Psoas muscle (tissue), 8 donors: ENCODE measurements at regions of chr15 and their contacts with region 1.

Region 1: DNA sequence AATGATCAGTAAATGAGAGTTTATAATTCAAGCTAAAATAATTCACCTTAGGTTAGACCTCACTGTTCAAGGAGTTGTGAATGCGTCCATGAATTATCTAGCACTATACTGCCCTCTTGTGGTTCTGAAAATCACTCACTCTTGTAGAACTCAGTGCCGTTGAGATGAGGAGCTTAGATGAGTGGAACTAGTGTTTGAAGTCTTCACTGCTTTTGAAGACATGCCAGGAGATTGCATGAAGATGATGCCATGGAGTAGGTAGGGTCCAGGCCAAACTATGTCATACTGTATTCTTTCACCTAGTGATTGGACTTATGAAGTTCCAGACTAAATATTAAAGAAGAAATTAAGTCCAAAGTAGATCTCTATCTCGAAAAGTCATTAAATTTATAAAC is 28.8 kb downstream of the LYSMD4 start:
- DNase-seq: no peak
- ATAC-seq: peak; percentile 71 to 82 (median 76)
- H3K4me3 ChIP-seq: no peak overlapping the region
- H3K27ac ChIP-seq: peak overlapping the region; percentile 90
- H3K4me1 ChIP-seq: peaks cover 49% of the 10 kb centered on the region
- H3K27me3 ChIP-seq: no peaks in the 10 kb centered on the region
- CTCF ChIP-seq: peak; percentile 85

Region 2: GRCh38 chr15:99275525-99276128 is 428.8 kb before region 1 on chr15:
- intact Hi-C with region 1: loop called in 1 of 2 experiments (anchors 5 kb)
- DNase-seq: no peak
- ATAC-seq: peak in 2 of 4 donors; percentile 26 to 35
- H3K4me3 ChIP-seq: no peak overlapping the region
- H3K27ac ChIP-seq: no peak overlapping the region
- H3K4me1 ChIP-seq: no peaks in the 10 kb centered on the region
- H3K27me3 ChIP-seq: no peaks in the 10 kb centered on the region
- CTCF ChIP-seq: no peak

Region 3: DNA sequence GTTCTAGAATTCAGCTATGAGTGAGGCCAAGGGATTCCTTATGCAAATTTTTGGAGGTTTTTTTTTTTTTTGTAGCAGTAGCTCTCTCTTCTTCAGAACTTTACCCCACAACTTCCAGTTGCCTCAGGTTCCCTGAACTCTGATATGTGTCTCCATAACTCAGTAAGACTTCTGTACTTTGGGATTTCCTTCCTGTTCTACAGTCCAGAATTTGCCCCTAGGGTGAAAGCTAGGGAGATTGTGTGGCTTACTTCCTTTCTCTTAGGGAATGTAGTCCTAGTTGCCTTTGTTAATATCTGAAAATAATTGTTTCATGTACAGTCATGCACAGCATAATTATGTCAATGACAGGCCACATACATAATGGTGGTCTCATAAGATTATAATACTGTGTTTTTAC is 422.3 kb before region 1 on chr15:
- intact Hi-C with region 1: loop called (anchors 1 to 5 kb)
- DNase-seq: no peak
- ATAC-seq: no peak
- H3K4me3 ChIP-seq: no peak overlapping the region
- H3K27ac ChIP-seq: no peak overlapping the region
- H3K4me1 ChIP-seq: peaks cover 18% of the 10 kb centered on the region
- H3K27me3 ChIP-seq: no peaks in the 10 kb centered on the region
- CTCF ChIP-seq: no peak

Region 4: DNA sequence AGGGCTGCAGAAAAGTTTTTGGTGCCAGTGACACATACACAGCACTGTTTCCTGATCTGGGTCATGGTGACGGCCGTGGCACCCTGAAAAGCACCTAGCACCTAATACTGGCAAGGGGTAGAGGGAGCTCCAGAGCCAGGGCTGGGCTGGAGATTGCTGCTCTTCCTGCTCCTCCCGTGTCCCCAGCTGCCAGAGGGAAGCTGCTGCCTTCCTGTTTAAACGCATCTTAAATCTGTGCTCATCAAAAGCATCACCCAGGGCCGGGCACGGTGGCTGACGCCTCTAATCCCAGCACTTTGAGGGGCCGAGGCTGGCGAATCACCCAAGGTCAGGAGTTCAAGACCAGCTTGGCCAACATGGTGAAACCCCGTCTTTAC is 295.4 kb before region 1 on chr15:
- intact Hi-C with region 1: loop called (anchors 5 kb)
- DNase-seq: peak; percentile 64 to 85
- ATAC-seq: peak; percentile 82 to 97 (median 94)
- H3K4me3 ChIP-seq: no peak overlapping the region
- H3K27ac ChIP-seq: peak overlapping the region; percentile 27
- H3K4me1 ChIP-seq: peaks cover 16% of the 10 kb centered on the region
- H3K27me3 ChIP-seq: no peaks in the 10 kb centered on the region
- CTCF ChIP-seq: peak; percentile 59

Region 5: DNA sequence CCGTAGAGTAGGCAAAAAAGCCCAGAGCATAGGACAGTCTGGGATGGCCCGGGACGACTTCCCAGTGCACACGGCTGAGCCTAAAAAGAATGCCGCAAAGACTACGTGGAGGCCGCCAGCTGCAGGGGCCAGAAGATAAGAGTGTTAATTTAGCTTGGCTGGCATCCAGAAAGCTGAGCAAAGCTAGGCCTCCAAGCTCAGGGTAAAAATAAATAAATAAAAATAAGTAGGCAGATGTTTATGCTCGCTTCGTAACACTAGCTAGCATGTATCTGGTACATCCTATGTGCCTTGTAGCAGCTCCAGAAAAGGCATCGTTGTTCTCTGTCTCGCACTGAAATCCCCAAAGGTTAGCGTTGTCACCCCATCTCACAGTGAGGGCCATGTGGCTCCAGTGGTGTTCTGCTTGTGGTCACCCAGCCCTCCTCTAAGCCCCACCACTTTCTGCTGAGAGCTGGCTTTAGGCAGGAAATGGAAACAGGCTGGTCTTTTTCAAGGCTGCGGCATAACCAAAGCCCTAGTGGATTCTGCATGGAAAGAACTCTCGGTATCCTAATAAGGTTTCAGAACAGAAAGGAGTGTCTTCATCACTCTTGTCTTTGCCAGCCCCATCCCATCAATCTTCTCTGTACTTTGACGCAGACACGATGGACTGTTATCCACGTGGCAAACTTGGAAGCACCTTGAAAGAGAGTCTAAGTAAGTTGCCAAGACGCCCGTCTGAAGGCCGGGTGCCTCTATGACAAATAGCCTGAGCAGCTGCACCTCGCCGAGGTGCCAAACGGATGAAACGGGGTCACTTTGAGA is 196.7 kb before region 1 on chr15:
- intact Hi-C with region 1: loop called in 1 of 2 experiments (anchors 5 kb)
- DNase-seq: peak; percentile 82 to 92
- ATAC-seq: peak; percentile 84 to 89 (median 85)
- H3K4me3 ChIP-seq: peak overlapping the region; percentile 41
- H3K27ac ChIP-seq: peak overlapping the region; percentile 94
- H3K4me1 ChIP-seq: peaks cover 71% of the 10 kb centered on the region
- H3K27me3 ChIP-seq: no peaks in the 10 kb centered on the region
- CTCF ChIP-seq: no peak